ENCODE measurements at regions of chr10 and their contacts with region 1.

Region 1: GRCh38 chr10:28663576-28664313 is 13.6 kb upstream of the BAMBI start:
- DNase-seq: peak; percentile 82
- ATAC-seq: peak; percentile 75
- H3K4me3 Mint-ChIP-seq: no peak overlapping the region
- H3K27ac Mint-ChIP-seq: no peak overlapping the region
- H3K4me1 Mint-ChIP-seq: peaks cover 7% of the 10 kb centered on the region
- H3K27me3 Mint-ChIP-seq: peaks cover 33% of the 10 kb centered on the region

Region 2: GRCh38 chr10:28774051-28774995 is 110.6 kb after region 1 on chr10:
- CTCF ChIA-PET with region 1: no interaction called
- POLR2A ChIA-PET with region 1: no interaction called
- intact Hi-C with region 1: no loop called
- DNase-seq: no peak
- ATAC-seq: no peak
- H3K4me3 Mint-ChIP-seq: no peak overlapping the region
- H3K27ac Mint-ChIP-seq: no peak overlapping the region
- H3K4me1 Mint-ChIP-seq: peaks cover 4% of the 10 kb centered on the region
- H3K27me3 Mint-ChIP-seq: peaks cover 4% of the 10 kb centered on the region

Region 3: GRCh38 chr10:28991326-28992270 is 327.9 kb after region 1 on chr10:
- CTCF ChIA-PET with region 1: interaction called, 18 read pairs
- POLR2A ChIA-PET with region 1: no interaction called
- intact Hi-C with region 1: loop called (anchors 1 kb)
- DNase-seq: peak; percentile 66
- ATAC-seq: peak; percentile 42
- H3K4me3 Mint-ChIP-seq: no peak overlapping the region
- H3K27ac Mint-ChIP-seq: no peak overlapping the region
- H3K4me1 Mint-ChIP-seq: peaks cover 5% of the 10 kb centered on the region
- H3K27me3 Mint-ChIP-seq: peaks cover 10% of the 10 kb centered on the region

Region 4: DNA sequence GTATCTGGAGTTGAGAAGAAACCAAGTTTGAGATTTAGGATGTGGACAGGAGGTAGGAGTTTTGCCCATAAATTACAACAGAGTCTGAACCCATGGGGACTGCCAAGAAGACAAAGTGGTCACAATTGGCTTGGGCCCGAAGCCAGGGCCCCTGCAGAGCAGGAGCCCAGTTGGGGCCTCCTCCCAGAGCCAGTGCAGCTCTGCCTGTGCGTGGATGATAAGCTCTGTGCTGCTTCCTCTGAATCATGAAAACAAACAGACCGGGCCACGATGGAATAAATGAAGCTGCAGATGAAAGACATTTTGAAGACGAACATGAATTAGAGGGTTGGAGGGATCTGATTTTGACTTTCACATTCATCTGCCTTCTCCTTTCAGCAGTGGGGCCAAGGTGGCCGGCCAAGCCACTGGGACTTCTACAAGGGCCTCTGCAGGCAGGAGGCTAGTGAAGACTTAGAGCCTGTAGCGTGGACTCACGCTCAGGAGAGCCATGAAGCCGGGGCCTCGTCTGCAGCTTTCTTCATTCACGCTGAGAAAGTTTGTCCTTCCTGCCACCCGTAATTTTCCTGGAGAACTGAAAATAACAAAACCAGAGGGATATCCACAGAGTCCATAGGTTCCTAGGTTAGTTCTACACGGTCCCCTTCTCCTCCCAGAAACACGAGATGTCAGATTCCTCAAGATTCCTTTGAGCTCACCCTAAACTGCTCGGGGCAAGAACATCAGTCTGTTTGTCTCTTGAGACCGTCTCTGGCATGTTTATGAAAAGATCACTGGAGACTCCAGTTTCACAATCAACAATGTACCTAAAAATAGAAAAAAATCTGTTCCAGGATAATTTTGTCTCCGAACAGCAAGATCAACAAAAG is 468.4 kb after region 1 on chr10:
- CTCF ChIA-PET with region 1: no interaction called
- POLR2A ChIA-PET with region 1: no interaction called
- intact Hi-C with region 1: loop called in 1 of 2 experiments (anchors 10 kb)
- DNase-seq: no peak
- ATAC-seq: no peak
- H3K4me3 Mint-ChIP-seq: no peak overlapping the region
- H3K27ac Mint-ChIP-seq: no peak overlapping the region
- H3K4me1 Mint-ChIP-seq: no peaks in the 10 kb centered on the region
- H3K27me3 Mint-ChIP-seq: peaks cover 25% of the 10 kb centered on the region

Region 5: GRCh38 chr10:29304264-29305030 is 640.7 kb after region 1 on chr10:
- CTCF ChIA-PET with region 1: interaction called, 20 read pairs
- POLR2A ChIA-PET with region 1: no interaction called
- intact Hi-C with region 1: loop called (anchors 1 kb)
- DNase-seq: peak; percentile 49
- ATAC-seq: no peak
- H3K4me3 Mint-ChIP-seq: no peak overlapping the region
- H3K27ac Mint-ChIP-seq: no peak overlapping the region
- H3K4me1 Mint-ChIP-seq: peaks cover 5% of the 10 kb centered on the region
- H3K27me3 Mint-ChIP-seq: peaks cover 28% of the 10 kb centered on the region

Measured in activated CD4-positive, alpha-beta T cell treated with anti-CD3 and anti-CD28 coated beads for 36 hours (primary cell).